H1 (cell line): ENCODE measurements at regions of chr15 and their contacts with region 1.

Region 1: GRCh38 chr15:65318870-65319356 is 14.4 kb downstream of the RNU5B-1 start:
- DNase-seq: peak in 1 of 2 experiments; percentile 90
- H3K4me3 ChIP-seq: no peak overlapping the region
- H3K27ac ChIP-seq: no peak overlapping the region
- H3K4me1 ChIP-seq: no peaks in the 10 kb centered on the region
- H3K27me3 ChIP-seq: 0 out of 7 replicates have a peak, but pooled peaks cover 0 to 3% (median 0%) of the 10 kb centered on the region in 4 experiments
- CTCF ChIP-seq: peak; percentile 62 to 98 (median 92)
- EP300 ChIP-seq: no peak
- POLR2A ChIP-seq: no peak
- RAD21 ChIP-seq: peak; percentile 99 to 100

Region 2: DNA sequence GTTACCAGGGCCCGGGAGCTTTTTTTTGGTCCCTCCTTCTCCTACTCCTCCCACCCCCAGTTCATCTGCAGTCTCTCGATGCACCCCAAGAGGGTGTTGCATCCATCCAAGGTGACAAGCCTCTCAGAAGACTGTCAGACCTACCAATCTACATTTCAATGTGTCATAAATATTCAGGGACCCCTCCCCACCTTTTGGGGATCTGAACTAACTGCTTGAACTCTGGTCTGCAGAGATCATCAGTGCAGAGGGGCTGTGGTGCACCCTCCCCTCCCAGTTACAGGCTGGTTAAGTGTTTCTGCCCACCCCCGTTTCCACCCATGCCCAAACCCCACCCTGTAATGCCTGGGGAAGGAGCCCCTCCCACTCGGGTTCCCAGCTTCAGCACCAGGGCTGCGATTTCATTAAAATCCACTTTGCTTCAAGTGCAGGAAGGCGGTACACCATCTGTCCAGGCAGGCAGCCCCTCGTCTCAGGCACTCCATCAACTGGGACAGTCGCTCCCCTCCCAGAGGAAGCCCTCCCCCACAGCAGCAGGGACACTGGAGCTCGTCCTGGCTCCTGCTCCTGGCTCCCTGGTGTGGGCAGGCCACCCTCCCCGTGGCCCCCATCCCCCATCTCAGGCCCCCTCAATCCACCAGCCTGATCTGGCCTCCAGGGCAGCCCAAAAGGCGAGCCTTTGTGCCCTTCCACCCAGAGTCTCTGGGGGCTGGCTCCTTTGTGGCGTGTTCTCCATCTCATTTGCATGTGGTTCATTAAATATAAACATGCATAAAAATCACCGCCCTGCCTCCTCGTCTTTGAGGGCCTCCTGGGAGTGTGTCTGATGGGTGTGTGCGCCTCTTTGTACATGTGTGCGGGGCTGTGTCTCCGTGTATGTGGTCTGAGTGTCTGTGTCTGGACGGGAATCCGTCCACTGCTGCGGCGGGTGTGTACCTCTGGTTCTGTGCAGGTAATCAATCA is 17.9 kb after region 1 on chr15:
- CTCF ChIA-PET with region 1: interaction called, 32 read pairs
- POLR2A ChIA-PET with region 1: interaction called, 20 read pairs
- DNase-seq: no peak
- H3K4me3 ChIP-seq: no peak overlapping the region
- H3K27ac ChIP-seq: no peak overlapping the region
- H3K4me1 ChIP-seq: peaks cover 20 to 48% (median 37%) of the 10 kb centered on the region in 4 experiments
- H3K27me3 ChIP-seq: no peaks in the 10 kb centered on the region
- CTCF ChIP-seq: peak in 2 of 3 experiments; percentile 28 to 38; a peak in 2 of 4 replicates
- EP300 ChIP-seq: no peak
- POLR2A ChIP-seq: no peak
- RAD21 ChIP-seq: peak; percentile 30 to 50; a peak in 3 of 4 replicates

Region 3: DNA sequence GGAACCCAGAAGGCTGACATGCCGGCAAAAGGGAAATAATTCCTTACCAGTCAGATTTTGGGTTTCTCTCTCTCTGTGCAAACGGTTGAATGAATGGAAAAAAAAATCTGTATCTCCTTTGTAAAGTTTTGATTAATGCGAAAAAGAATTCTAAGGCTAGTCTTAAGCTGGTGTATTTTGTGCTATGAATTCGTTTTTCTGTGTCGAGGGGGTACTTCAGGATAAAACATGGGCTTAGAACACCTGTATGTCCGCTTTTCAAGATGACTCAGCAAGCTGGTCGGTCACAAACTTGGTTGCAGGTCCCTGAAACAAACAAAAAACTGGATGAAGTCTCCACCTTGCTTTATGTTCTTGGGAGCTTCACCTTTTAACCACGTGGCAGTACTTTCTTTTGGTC is 30.4 kb after region 1 on chr15:
- CTCF ChIA-PET with region 1: interaction called, 11 read pairs
- POLR2A ChIA-PET with region 1: no interaction called
- DNase-seq: no peak
- H3K4me3 ChIP-seq: no peak overlapping the region
- H3K27ac ChIP-seq: no peak overlapping the region
- H3K4me1 ChIP-seq: peaks cover 0 to 2% (median 0%) of the 10 kb centered on the region in 4 experiments; a peak in 1 of 7 replicates
- H3K27me3 ChIP-seq: peaks cover 0 to 4% (median 1%) of the 10 kb centered on the region in 4 experiments; a peak in 3 of 7 replicates
- CTCF ChIP-seq: no peak
- EP300 ChIP-seq: no peak
- POLR2A ChIP-seq: no peak
- RAD21 ChIP-seq: no peak

Region 4: DNA sequence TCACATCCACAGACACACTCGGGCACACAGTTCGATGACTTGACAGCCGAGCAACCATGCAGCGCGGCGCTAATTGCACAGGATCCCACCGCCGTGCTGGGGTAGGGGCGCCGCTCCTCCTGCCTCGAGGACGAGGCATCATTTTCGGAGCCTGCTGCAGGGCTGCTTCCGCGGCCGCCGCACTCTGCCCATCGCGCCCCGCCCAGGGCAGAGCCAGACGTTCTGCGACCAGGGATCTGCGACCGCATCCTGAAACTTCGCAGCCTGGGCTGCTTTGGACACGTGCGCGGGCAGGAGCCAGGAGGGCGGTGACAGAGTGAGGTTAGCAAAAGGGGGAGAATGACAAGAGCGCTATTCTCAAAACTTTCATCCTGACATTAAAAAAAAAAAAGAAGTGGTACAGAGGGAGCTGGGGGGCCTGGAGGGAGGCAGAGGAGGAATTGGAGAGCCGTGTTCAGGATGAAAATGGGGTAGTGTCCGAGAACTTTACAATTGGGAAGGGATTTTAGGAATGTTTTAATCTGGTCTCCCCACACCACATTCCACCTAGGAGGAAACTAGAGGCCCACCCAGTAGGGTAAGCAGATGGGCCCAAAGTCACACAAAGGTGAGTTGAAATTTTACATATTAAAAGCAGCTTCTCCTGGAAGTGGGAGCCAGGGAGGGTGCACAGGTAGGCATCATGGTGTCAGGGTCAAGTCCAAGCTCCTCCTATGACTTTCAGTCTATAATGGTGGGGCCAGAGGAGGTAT is 43.0 kb after region 1 on chr15:
- CTCF ChIA-PET with region 1: interaction called, 43 read pairs
- POLR2A ChIA-PET with region 1: interaction called, 57 read pairs
- DNase-seq: peak in 1 of 2 experiments; percentile 66
- H3K4me3 ChIP-seq: peak overlapping the region in 1 of 4 experiments; percentile 0; a peak in 1 of 8 replicates
- H3K27ac ChIP-seq: no peak overlapping the region
- H3K4me1 ChIP-seq: peaks cover 18 to 35% (median 26%) of the 10 kb centered on the region in 4 experiments
- H3K27me3 ChIP-seq: peaks cover 0 to 13% (median 6%) of the 10 kb centered on the region in 4 experiments; a peak in 5 of 7 replicates
- CTCF ChIP-seq: no peak
- EP300 ChIP-seq: no peak
- POLR2A ChIP-seq: no peak
- RAD21 ChIP-seq: no peak

Region 5: DNA sequence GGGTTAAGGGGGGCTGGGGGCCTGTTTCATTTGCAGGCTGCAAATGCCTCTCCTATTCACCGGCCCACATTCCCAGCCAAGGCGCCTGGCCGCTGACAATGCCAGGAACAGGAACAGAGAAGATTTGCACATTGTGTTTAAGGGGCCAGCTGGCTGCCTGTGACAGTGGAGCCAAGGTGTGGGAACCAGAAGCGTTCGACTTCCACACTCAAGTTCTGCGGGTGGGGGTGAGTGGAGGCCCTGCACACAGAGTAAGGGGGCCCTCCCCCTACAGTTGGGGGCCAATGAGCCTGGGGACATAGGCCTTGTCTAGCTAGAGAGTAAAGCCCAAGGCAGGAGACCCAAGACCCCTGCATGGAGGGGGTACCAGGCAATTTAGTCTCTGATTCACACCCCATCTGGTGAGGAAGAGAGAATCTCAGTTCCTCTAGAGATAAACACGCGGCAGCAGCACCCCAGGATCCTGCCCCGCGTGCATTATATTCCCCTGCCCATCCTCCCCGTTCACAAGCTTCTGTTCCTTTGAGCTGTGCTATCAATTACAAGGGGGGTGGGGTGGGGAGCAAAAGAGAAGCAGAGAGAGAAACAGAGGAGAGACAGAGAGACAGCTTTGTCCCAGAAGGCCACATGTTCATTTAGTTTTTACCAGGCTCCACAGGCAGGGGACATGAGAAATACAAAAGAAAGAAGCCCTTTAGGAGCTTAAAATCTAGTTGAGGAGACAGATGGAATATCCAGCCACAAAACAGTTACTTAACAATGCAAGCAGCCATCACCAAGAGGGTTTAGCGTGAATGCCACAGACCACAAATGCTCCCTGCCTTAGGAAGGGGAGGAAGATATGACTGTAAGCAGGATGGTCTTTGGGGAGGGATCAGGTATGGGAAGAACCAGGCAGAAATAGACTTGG is 49.6 kb after region 1 on chr15:
- CTCF ChIA-PET with region 1: interaction called, 43 read pairs
- POLR2A ChIA-PET with region 1: interaction called, 57 read pairs
- DNase-seq: peak; percentile 60 to 63
- H3K4me3 ChIP-seq: peak overlapping the region in 2 of 4 experiments; percentile 19 to 27; a peak in 3 of 8 replicates
- H3K27ac ChIP-seq: peak overlapping the region; percentile 26
- H3K4me1 ChIP-seq: peaks cover 31 to 56% (median 42%) of the 10 kb centered on the region in 4 experiments
- H3K27me3 ChIP-seq: no peaks in the 10 kb centered on the region
- CTCF ChIP-seq: no peak
- EP300 ChIP-seq: no peak
- POLR2A ChIP-seq: no peak
- RAD21 ChIP-seq: no peak

Region 6: DNA sequence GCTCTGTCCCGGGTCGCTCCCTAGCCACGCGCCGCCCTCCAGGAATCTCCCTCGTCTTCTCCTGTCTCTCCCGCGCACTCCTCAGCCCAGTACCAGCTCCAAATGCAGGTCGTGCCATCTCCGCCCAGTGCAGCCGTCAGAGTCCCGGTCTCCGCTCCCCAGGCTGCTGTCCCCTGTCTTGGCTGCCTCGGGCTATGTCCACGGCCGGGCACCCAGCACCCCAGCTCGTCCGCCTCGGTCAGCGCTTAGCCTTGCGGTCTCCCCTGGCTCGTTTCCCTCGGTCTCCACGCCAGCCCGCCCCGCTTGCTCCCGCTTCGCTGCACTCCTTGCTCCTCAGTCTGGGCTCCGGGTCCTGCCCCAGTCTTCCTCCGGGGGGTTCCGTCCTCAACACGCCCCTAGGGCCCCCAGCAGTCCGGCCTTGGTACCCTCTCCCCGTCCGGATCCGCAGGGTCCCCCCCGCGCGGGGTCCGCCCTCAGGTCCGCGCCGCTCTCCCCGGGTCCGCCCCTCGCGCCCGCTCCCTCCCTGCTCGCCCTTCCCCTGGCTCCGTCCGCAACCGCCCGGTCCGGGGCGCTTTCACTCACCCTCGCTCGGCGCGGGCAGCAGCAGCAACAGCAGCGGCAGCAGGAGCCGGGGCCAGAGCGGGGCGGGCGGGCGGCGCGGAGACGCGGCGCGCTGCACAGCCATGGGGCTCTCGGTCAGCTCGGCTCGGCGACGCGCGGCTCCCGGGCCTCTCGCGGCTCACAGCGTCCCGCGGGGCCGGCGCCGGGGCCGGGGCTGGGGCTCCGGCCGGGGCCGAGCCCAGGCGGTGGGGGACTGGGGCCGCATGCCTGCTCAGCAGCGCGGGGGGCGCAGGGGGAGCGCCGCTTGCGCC is 58.4 kb after region 1 on chr15:
- CTCF ChIA-PET with region 1: interaction called, 547 read pairs
- POLR2A ChIA-PET with region 1: interaction called, 57 read pairs
- DNase-seq: peak in 1 of 2 experiments; percentile 83
- H3K4me3 ChIP-seq: peak overlapping the region; percentile 58 to 89 (median 80)
- H3K27ac ChIP-seq: no peak overlapping the region
- H3K4me1 ChIP-seq: peaks cover 8 to 25% (median 14%) of the 10 kb centered on the region in 4 experiments
- H3K27me3 ChIP-seq: peaks cover 0 to 20% (median 10%) of the 10 kb centered on the region in 4 experiments; a peak in 5 of 7 replicates
- CTCF ChIP-seq: no peak
- EP300 ChIP-seq: no peak
- POLR2A ChIP-seq: no peak; a peak in 1 of 3 replicates
- RAD21 ChIP-seq: no peak